Activated CD4-positive, alpha-beta memory T cell treated with anti-CD3 and anti-CD28 coated beads, Interleukin-2, amount 10 ng/mL, durations not matched to agents 7 days and 5 days (primary cell): ENCODE measurements at regions of chr14 and their contacts with region 1.

Region 1: GRCh38 chr14:64478634-64479250 is 13.4 kb downstream of the AKAP5 start:
- DNase-seq: no peak
- H3K4me3 Mint-ChIP-seq: no peak overlapping the region
- H3K27ac Mint-ChIP-seq: no peak overlapping the region
- H3K4me1 Mint-ChIP-seq: peaks cover 11% of the 10 kb centered on the region
- H3K27me3 Mint-ChIP-seq: no peaks in the 10 kb centered on the region

Region 2: DNA sequence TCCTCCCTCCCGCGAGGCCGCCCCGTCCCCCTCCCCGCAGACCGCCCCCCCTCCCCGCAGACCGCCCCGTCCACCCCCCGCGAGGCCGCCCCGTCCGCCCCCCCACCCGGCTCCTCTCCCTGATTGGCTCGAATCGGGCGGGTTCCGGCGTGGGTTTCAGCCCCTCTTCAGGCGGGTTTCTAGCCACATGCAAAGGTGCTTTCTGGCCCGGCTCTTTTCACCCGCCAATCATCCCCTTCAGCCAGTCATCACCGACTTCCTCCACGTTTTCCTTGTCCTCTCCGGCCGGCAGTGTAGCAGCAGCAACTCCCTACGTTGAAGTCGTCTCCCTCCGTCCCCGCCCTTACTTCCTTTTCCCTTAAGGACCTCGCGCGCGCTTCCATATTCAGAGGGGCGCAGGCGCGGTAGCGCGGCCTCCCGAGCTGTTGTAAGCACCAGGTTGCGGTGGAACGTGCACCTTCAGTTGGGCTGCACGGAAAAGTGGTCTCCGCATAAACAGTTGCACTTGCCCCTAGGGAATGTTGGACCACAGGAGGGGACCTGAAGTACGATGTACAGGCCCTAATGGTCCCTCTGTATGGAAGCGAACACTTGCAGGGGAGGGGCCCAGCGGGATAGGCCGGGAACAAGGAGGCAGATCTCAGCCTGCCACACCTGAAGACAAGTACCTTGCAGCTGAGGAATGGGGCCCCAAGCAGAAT is 140.0 kb before region 1 on chr14:
- CTCF ChIA-PET with region 1: interaction called, 34 read pairs
- POLR2A ChIA-PET with region 1: no interaction called
- DNase-seq: peak; percentile 91
- H3K4me3 Mint-ChIP-seq: peak overlapping the region; percentile 77
- H3K27ac Mint-ChIP-seq: peak overlapping the region; percentile 80
- H3K4me1 Mint-ChIP-seq: peaks cover 33% of the 10 kb centered on the region
- H3K27me3 Mint-ChIP-seq: no peaks in the 10 kb centered on the region

Region 3: DNA sequence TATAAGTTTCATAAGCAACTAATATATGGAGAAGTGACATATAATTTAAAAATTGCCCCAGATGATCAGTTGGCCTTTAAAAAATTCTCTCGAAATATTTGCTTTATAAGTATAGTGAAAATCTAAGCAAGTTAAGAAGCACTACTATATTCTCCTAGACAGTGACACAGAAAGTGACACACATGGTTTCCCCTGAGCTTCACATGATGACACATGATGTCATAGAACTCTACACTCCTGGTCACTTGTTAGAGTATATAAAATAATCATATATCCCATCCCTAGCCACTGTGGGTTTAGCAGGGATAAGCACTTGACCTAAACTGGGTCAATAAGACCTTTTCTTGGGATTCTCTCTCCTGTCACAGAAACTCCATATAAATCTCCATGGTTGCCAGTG is 133.2 kb before region 1 on chr14:
- CTCF ChIA-PET with region 1: interaction called, 34 read pairs
- POLR2A ChIA-PET with region 1: no interaction called
- DNase-seq: no peak
- H3K4me3 Mint-ChIP-seq: no peak overlapping the region
- H3K27ac Mint-ChIP-seq: no peak overlapping the region
- H3K4me1 Mint-ChIP-seq: peaks cover 6% of the 10 kb centered on the region
- H3K27me3 Mint-ChIP-seq: no peaks in the 10 kb centered on the region

Region 4: DNA sequence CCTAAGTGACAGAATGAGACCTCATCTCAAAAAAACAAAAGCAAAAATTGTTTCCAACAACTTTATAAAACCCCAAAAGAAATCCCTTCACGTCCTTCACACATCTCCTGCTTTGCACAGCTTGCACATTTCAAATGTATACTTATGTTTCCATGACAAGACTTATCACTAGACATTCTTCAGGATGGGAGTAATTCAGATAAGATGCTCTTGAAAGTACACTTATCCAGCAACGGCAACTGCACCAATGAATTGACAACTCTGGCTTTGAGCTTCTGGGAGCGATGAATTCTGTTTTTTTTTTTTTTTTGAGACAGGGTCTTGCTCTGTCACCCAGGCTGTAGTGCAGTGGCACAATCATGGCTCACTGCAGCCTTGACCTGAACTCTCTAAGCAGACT is 44.2 kb before region 1 on chr14:
- CTCF ChIA-PET with region 1: interaction called, 35 read pairs
- POLR2A ChIA-PET with region 1: interaction called, 4 read pairs
- DNase-seq: no peak
- H3K4me3 Mint-ChIP-seq: no peak overlapping the region
- H3K27ac Mint-ChIP-seq: no peak overlapping the region
- H3K4me1 Mint-ChIP-seq: peaks cover 18% of the 10 kb centered on the region
- H3K27me3 Mint-ChIP-seq: no peaks in the 10 kb centered on the region

Region 5: DNA sequence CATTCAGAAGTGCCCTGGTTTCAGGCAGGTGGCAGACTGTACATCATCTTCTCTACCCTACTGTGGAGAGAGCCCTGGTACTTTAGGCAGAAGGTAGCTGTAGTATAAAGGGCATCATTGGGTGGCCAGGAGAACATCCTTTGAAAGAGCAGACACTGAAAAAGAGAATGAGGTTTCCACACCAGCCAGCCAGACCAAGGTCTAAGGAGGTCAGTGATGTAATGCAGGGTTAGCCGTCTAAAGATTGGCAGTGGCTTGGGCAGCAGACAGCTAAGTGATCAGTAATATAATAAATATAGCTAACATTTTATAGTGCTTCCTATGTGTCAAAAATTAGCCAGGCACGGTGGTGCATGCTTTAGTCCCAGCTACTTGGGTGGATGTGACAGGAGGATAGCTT is 12.9 kb after region 1 on chr14:
- CTCF ChIA-PET with region 1: interaction called, 11 read pairs
- POLR2A ChIA-PET with region 1: interaction called, 3 read pairs
- DNase-seq: no peak
- H3K4me3 Mint-ChIP-seq: no peak overlapping the region
- H3K27ac Mint-ChIP-seq: no peak overlapping the region
- H3K4me1 Mint-ChIP-seq: peaks cover 19% of the 10 kb centered on the region
- H3K27me3 Mint-ChIP-seq: no peaks in the 10 kb centered on the region

Region 6: DNA sequence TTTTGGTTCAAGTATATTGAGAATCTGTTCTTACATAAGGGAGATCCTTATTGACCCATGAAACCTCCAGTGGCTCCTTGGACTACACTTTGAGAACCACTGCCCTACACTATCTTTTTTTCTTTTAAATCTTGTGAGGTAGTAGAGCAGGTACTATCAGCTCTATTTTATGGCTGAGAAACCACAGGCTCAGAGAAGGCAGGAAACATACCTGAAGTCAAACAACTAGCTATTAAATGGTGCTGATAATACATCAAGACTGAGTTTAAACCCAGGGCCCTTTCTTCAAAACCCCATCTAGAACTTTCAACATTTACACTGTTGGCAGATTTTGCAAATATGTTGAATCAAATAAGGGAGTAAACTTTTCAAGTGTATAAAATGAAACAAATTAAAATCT is 18.0 kb after region 1 on chr14:
- CTCF ChIA-PET with region 1: interaction called, 11 read pairs
- POLR2A ChIA-PET with region 1: interaction called, 20 read pairs
- DNase-seq: no peak
- H3K4me3 Mint-ChIP-seq: no peak overlapping the region
- H3K27ac Mint-ChIP-seq: no peak overlapping the region
- H3K4me1 Mint-ChIP-seq: peaks cover 50% of the 10 kb centered on the region
- H3K27me3 Mint-ChIP-seq: no peaks in the 10 kb centered on the region

Region 7: GRCh38 chr14:64503478-64504309 is 25.0 kb after region 1 on chr14 and contains the start of gene ZBTB25:
- CTCF ChIA-PET with region 1: interaction called, 10 read pairs
- POLR2A ChIA-PET with region 1: interaction called, 20 read pairs
- DNase-seq: peak; percentile 97
- H3K4me3 Mint-ChIP-seq: peak within 1 kb of the TSS; percentile 94
- H3K27ac Mint-ChIP-seq: peak within 1 kb of the TSS; percentile 100
- H3K4me1 Mint-ChIP-seq: peaks cover 48% of the 10 kb centered on the region
- H3K27me3 Mint-ChIP-seq: no peaks in the 10 kb centered on the region
- total RNA-seq, gene ZBTB25: 38.8 to 40.5 TPM

Region 8: DNA sequence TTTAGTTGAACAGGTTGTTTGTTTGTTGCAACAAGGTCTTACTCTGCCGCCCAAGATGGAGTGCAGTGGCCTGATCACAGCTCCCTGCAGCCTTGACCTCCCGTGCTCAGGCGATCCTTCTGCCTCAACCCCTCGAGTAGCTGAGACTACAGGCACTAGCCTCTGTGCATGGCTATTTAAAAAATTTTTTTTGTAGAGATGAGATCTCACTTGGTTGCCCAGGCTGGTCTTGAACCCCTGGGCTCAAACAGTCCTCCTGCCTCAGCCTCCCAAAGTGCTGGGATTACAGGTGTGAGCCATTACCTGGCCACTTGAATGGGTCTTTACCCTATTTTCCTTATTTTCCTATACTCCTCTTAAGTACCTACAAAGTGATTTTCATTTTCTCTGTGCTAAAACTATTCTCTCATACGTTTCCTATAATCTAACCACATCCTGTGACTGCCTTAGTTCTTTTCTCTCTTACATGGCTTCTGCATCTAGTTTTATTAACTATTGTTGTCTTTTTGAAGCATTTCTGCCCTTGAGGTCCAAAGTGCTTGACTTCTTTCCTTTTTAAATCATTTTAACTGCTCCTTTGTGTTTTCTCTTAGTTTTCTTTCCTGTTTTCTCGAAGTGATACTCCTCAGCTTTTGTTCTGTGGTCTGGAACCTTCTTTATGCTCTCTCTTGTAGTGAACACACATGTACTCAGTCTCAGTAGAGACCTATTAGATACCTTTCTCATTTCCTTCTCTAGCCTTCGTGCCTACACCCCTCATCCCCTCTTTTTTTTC is 449.7 kb after region 1 on chr14:
- CTCF ChIA-PET with region 1: no interaction called
- POLR2A ChIA-PET with region 1: no interaction called
- DNase-seq: no peak
- H3K4me3 Mint-ChIP-seq: no peak overlapping the region
- H3K27ac Mint-ChIP-seq: no peak overlapping the region
- H3K4me1 Mint-ChIP-seq: peaks cover 21% of the 10 kb centered on the region
- H3K27me3 Mint-ChIP-seq: no peaks in the 10 kb centered on the region